Cardiac septum (tissue), 1 donor: ENCODE measurements at regions of chr11 and their contacts with region 1.

Region 1: GRCh38 chr11:117817368-117818040 is 7.0 kb downstream of the FXYD2 start:
- DNase-seq: peak; percentile 88

Region 2: GRCh38 chr11:118051611-118052461 is 234.3 kb after region 1 on chr11:
- intact Hi-C with region 1: loop called (anchors 5 kb)
- DNase-seq: peak; percentile 53